ENCODE measurements at regions of chr16 and their contacts with region 1.

Region 1: GRCh38 chr16:30902029-30902972 is 5.9 kb downstream of the CTF1 start:
- DNase-seq: peak; percentile 65 to 72
- H3K4me3 ChIP-seq: peak overlapping the region in 2 of 3 donors; percentile 40
- H3K27ac ChIP-seq: peak overlapping the region; percentile 84 to 88 (median 86)
- H3K4me1 ChIP-seq: peaks cover 6 to 14% of the 10 kb centered on the region in 2 donors
- H3K27me3 ChIP-seq: no peaks in the 10 kb centered on the region
- CTCF ChIP-seq: peak in 4 of 6 experiments; percentile 16 to 77 (median 64)
- POLR2A ChIP-seq: peak in 1 of 2 donors; percentile 33

Region 2: DNA sequence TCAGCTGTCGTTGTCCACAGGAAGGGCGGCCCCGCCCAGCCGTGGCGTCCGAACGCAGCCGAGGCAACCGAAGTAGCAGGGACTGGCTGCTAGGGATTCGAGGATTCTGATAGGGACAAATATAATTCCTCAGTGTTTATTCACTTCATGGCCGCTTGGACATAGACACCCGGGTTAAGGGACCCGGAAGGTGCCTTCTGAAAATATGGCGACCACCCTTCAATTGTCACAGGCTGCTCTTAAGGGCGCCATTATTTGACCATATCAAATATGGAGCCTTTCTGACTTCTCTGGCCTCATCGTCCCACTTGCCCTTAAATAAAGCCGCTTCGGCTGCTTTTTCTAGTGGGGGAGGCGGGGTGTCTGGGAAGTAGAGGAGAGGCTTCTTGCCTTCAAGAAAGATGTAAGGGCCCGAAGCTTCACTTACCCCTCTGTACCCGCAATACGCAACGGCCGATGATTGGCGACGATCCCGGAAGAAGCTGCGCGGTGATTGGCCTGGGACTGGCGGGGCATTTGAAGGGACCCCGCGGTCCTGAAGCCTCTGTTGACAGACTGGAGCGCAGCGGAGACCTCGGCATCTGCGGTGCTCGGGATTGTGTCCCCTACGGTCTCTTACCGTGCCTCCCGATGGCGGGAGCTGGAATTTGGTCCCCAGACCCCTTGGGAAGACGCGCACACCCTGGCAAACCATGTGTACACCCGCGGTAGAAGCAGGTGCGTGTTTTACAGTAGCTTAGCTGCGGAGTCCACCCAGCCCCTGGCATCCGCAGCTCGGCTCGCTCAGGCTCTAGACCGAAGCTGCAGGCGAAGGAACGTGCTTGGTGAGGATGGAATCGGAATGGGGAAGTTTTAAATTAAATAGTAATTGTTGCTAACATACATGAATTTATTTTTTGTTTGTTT is 330.4 kb before region 1 on chr16 and contains the start of gene ZNF688:
- intact Hi-C with region 1: no loop called
- DNase-seq: peak; percentile 98 to 99
- H3K4me3 ChIP-seq: peak within 1 kb of the TSS; percentile 12 to 93 (median 68)
- H3K27ac ChIP-seq: peak within 1 kb of the TSS; percentile 79 to 99 (median 95)
- H3K4me1 ChIP-seq: peaks cover 15 to 18% of the 10 kb centered on the region in 2 donors
- H3K27me3 ChIP-seq: no peaks in the 10 kb centered on the region
- CTCF ChIP-seq: peak in 1 of 6 experiments; percentile 29
- POLR2A ChIP-seq: peak in 1 of 2 donors; percentile 75
- total RNA-seq, gene ZNF688: 10.6 to 26.1 (median 16.5) TPM

Region 3: GRCh38 chr16:30659507-30660423 is 242.5 kb before region 1 on chr16:
- intact Hi-C with region 1: loop called (anchors 5 kb)
- DNase-seq: peak; percentile 16 to 23
- H3K4me3 ChIP-seq: peak overlapping the region; percentile 76 to 96 (median 95)
- H3K27ac ChIP-seq: peak overlapping the region; percentile 78 to 97 (median 95)
- H3K4me1 ChIP-seq: peaks cover 26 to 35% of the 10 kb centered on the region in 2 donors
- H3K27me3 ChIP-seq: no peaks in the 10 kb centered on the region
- CTCF ChIP-seq: no peak
- POLR2A ChIP-seq: no peak

Region 4: GRCh38 chr16:30820952-30821760 is 81.1 kb before region 1 on chr16:
- intact Hi-C with region 1: no loop called
- DNase-seq: no peak
- H3K4me3 ChIP-seq: no peak overlapping the region
- H3K27ac ChIP-seq: no peak overlapping the region
- H3K4me1 ChIP-seq: no peaks in the 10 kb centered on the region
- H3K27me3 ChIP-seq: no peaks in the 10 kb centered on the region
- CTCF ChIP-seq: no peak
- POLR2A ChIP-seq: no peak

Region 5: GRCh38 chr16:30844671-30845449 is 57.4 kb before region 1 on chr16:
- intact Hi-C with region 1: loop called (anchors 2 kb)
- DNase-seq: peak; percentile 56 to 75
- H3K4me3 ChIP-seq: no peak overlapping the region
- H3K27ac ChIP-seq: peak overlapping the region in 1 of 3 donors; percentile 41
- H3K4me1 ChIP-seq: peaks cover 5 to 10% of the 10 kb centered on the region in 2 donors
- H3K27me3 ChIP-seq: no peaks in the 10 kb centered on the region
- CTCF ChIP-seq: peak; percentile 63 to 94 (median 88)
- POLR2A ChIP-seq: no peak

Region 6: GRCh38 chr16:30921748-30922419 is 19.6 kb after region 1 on chr16:
- intact Hi-C with region 1: loop called (anchors 2 kb)
- DNase-seq: peak; percentile 93
- H3K4me3 ChIP-seq: peak overlapping the region; percentile 13 to 84 (median 35)
- H3K27ac ChIP-seq: peak overlapping the region; percentile 28 to 92 (median 76)
- H3K4me1 ChIP-seq: peaks cover 9 to 10% of the 10 kb centered on the region in 2 donors
- H3K27me3 ChIP-seq: no peaks in the 10 kb centered on the region
- CTCF ChIP-seq: peak; percentile 58 to 96 (median 86)
- POLR2A ChIP-seq: peak in 1 of 2 donors; percentile 46

Measured in thyroid gland (tissue), 4 donors.